Ascending aorta (tissue), 2 donors: ENCODE measurements at regions of chr15 and their contacts with region 1.

Region 1: DNA sequence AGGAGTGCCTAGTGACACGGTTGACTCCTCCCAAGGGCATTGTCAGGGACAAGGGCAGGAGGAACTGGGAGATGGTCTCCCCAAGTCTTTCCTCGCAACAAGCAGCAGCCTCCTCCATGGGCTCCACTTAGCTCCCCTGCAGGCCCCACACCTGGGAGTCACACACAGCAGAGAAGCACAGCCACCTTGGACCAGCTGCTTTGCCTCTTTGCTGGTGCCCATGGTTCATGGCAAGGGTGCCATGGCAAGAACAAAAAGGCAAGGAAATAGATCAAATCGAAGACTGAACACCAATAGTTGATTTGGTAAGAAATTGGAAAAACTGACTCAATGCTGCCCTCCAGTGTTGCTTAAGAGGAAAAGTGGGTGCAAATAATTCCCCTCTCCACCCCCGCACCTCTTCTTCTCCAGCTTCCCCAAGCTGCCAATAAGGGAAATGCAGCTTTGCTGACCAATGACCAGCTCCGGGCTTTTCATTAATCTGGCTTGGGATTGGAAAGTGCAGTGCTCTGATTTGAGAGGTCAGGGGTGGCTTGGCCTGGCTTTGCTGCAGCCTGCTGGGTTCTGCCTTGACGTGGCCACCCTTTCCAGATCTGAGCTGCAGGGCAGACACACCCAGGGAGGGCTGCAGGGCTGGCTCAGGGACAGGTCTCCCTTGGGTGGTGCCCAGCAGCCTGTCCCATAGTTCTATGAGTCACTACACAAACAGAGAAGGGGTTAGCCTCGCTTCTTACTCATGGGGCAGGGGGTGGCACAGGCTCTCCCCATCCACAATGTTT is 162.0 kb downstream of the KLF13 start:
- DNase-seq: peak; percentile 26 to 86
- H3K4me3 ChIP-seq: no peak overlapping the region
- H3K27ac ChIP-seq: peak overlapping the region; percentile 76 to 81
- H3K4me1 ChIP-seq: peaks cover 10 to 23% of the 10 kb centered on the region in 2 donors
- H3K27me3 ChIP-seq: no peaks in the 10 kb centered on the region
- CTCF ChIP-seq: peak; percentile 84 to 91 (median 87)

Region 2: GRCh38 chr15:31200735-31201151 is 287.9 kb before region 1 on chr15:
- intact Hi-C with region 1: loop called (anchors 2 kb)
- DNase-seq: no peak
- H3K4me3 ChIP-seq: no peak overlapping the region
- H3K27ac ChIP-seq: no peak overlapping the region
- H3K4me1 ChIP-seq: no peaks in the 10 kb centered on the region
- H3K27me3 ChIP-seq: no peaks in the 10 kb centered on the region
- CTCF ChIP-seq: peak in 2 of 3 experiments; percentile 20 to 42

Region 3: GRCh38 chr15:31215490-31216214 is 273.0 kb before region 1 on chr15:
- intact Hi-C with region 1: loop called (anchors 2 kb)
- DNase-seq: peak; percentile 25 to 86
- H3K4me3 ChIP-seq: peak overlapping the region; percentile 63 to 76
- H3K27ac ChIP-seq: peak overlapping the region; percentile 87 to 91
- H3K4me1 ChIP-seq: peaks cover 10 to 14% of the 10 kb centered on the region in 2 donors
- H3K27me3 ChIP-seq: no peaks in the 10 kb centered on the region
- CTCF ChIP-seq: peak; percentile 83 to 90 (median 88)

Region 4: GRCh38 chr15:31365655-31366127 is 122.9 kb before region 1 on chr15:
- intact Hi-C with region 1: loop called (anchors 1 kb)
- DNase-seq: peak; percentile 88 to 98
- H3K4me3 ChIP-seq: peak overlapping the region; percentile 18 to 58
- H3K27ac ChIP-seq: peak overlapping the region; percentile 74 to 79
- H3K4me1 ChIP-seq: peaks cover 15 to 38% of the 10 kb centered on the region in 2 donors
- H3K27me3 ChIP-seq: no peaks in the 10 kb centered on the region
- CTCF ChIP-seq: peak; percentile 20 to 63 (median 52)

Region 5: DNA sequence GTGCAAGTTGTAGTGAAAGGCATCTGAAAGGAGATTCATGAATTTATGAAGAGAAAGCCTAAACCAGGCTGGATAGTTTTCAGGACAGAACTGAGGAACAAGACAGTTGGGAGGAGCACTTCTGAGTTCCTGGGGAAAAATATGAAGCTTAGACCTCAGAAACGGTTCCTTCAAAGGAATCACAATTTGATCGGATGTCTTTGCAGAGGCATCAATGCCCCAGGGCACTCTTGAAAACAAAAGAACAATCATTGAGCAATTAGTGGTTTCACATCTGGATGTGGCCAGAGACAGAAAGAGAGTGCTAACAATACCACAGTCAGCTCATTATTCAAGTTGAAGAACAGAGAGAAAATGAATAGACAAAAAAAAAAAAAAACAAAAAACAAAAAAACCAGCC is 75.8 kb before region 1 on chr15:
- intact Hi-C with region 1: no loop called
- DNase-seq: no peak
- H3K4me3 ChIP-seq: no peak overlapping the region
- H3K27ac ChIP-seq: no peak overlapping the region
- H3K4me1 ChIP-seq: no peaks in the 10 kb centered on the region
- H3K27me3 ChIP-seq: no peaks in the 10 kb centered on the region
- CTCF ChIP-seq: no peak

Region 6: GRCh38 chr15:31442203-31443111 is 46.2 kb before region 1 on chr15:
- intact Hi-C with region 1: loop called (anchors 2 kb)
- DNase-seq: no peak
- H3K4me3 ChIP-seq: no peak overlapping the region
- H3K27ac ChIP-seq: peak overlapping the region; percentile 49 to 70
- H3K4me1 ChIP-seq: peaks cover 7 to 24% of the 10 kb centered on the region in 2 donors
- H3K27me3 ChIP-seq: no peaks in the 10 kb centered on the region
- CTCF ChIP-seq: peak in 2 of 3 experiments; percentile 5 to 10